ENCODE measurements at regions of chr7 and their contacts with region 1.

Region 1: DNA sequence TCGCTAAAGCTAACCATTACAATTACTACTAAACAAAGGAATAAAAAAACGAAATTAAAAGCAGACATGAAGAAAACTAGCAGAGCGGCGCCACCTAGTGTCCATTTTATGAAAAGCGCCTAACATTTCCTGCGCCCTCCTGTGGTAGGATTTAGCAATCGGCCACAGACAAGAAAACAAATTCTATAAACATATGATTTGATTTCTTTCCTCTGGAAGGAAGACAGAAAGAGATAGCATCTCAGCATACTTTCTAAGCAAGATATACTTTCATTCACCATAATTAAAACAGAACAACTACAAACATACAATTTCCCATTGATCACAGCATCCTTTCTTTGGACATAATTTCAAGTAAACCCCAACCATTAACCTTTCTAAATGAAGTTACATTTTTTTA is 337.7 kb upstream of the NPVF start:
- DNase-seq: peak; percentile 60
- H3K27ac ChIP-seq: no peak overlapping the region
- CTCF ChIP-seq: peak; percentile 100

Region 2: GRCh38 chr7:25259587-25260243 is 306.2 kb before region 1 on chr7:
- CTCF ChIA-PET with region 1: interaction called, 10 read pairs
- POLR2A ChIA-PET with region 1: no interaction called
- DNase-seq: peak; percentile 71
- H3K27ac ChIP-seq: no peak overlapping the region
- CTCF ChIP-seq: peak; percentile 80

Region 3: GRCh38 chr7:26978146-26978545 is 1412.2 kb after region 1 on chr7:
- CTCF ChIA-PET with region 1: no interaction called
- POLR2A ChIA-PET with region 1: no interaction called
- DNase-seq: no peak
- H3K27ac ChIP-seq: no peak overlapping the region
- CTCF ChIP-seq: no peak